Activated CD4-positive, alpha-beta T cell treated with anti-CD3 and anti-CD28 coated beads, Interleukin-2, amount 10 ng/mL, durations not matched to agents 24 days and 14 days (primary cell): ENCODE measurements at regions of chr11 and their contacts with region 1.

Region 1: GRCh38 chr11:17354601-17354991 is 3.0 kb downstream of the NCR3LG1 start:
- DNase-seq: peak; percentile 90
- H3K4me3 Mint-ChIP-seq: peak overlapping the region; percentile 93
- H3K27ac Mint-ChIP-seq: peak overlapping the region; percentile 16
- H3K4me1 Mint-ChIP-seq: peaks cover 29% of the 10 kb centered on the region
- H3K27me3 Mint-ChIP-seq: peaks cover 34% of the 10 kb centered on the region

Region 2: DNA sequence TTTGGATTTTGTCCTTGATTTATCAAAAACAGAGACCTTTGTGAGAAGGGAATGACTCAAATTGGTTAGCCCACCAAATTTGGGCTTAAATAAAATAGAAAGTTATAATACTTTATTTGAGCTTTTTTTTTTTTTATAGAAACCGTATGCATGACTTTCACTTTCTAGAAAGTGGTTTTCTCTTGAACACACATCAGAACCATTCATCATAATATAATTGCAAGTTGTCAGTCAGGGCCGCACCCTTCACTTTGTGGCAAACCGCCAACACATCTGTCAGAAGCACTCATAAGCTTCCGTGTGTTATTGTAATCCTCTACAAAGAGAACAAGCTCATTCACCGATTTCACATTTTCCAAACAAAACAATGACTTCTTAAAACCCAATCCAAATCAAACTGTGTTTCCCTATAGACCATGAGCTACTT is 1074.3 kb before region 1 on chr11:
- intact Hi-C with region 1: no loop called
- DNase-seq: peak; percentile 56
- H3K4me3 Mint-ChIP-seq: no peak overlapping the region
- H3K27ac Mint-ChIP-seq: no peak overlapping the region
- H3K4me1 Mint-ChIP-seq: no peaks in the 10 kb centered on the region
- H3K27me3 Mint-ChIP-seq: no peaks in the 10 kb centered on the region

Region 3: GRCh38 chr11:16902781-16903378 is 451.7 kb before region 1 on chr11:
- intact Hi-C with region 1: loop called (anchors 2 kb)
- DNase-seq: peak; percentile 63
- H3K4me3 Mint-ChIP-seq: peak overlapping the region; percentile 46
- H3K27ac Mint-ChIP-seq: peak overlapping the region; percentile 97
- H3K4me1 Mint-ChIP-seq: peaks cover 42% of the 10 kb centered on the region
- H3K27me3 Mint-ChIP-seq: no peaks in the 10 kb centered on the region

Region 4: DNA sequence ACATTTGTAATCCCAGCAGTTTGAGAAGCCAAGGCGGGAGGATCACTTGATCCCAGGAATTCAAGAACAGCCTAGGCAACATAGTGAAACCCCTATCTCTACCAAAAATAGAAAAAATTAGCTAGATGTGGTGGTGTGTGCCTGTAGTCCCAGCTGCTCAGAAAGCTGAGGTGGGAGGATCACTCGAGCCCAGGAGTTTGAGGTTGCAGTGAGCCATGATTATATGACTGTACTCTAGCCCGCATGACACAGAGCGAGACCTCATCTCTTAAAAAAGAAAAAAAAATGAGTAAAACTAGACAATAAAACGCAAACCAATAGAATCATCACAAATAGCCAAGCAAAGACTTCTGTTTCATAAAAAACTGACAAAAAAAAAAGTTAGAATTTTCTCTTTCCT is 56.3 kb before region 1 on chr11:
- intact Hi-C with region 1: loop called (anchors 1 kb)
- DNase-seq: peak; percentile 70
- H3K4me3 Mint-ChIP-seq: peak overlapping the region; percentile 5
- H3K27ac Mint-ChIP-seq: no peak overlapping the region
- H3K4me1 Mint-ChIP-seq: peaks cover 27% of the 10 kb centered on the region
- H3K27me3 Mint-ChIP-seq: no peaks in the 10 kb centered on the region

Region 5: DNA sequence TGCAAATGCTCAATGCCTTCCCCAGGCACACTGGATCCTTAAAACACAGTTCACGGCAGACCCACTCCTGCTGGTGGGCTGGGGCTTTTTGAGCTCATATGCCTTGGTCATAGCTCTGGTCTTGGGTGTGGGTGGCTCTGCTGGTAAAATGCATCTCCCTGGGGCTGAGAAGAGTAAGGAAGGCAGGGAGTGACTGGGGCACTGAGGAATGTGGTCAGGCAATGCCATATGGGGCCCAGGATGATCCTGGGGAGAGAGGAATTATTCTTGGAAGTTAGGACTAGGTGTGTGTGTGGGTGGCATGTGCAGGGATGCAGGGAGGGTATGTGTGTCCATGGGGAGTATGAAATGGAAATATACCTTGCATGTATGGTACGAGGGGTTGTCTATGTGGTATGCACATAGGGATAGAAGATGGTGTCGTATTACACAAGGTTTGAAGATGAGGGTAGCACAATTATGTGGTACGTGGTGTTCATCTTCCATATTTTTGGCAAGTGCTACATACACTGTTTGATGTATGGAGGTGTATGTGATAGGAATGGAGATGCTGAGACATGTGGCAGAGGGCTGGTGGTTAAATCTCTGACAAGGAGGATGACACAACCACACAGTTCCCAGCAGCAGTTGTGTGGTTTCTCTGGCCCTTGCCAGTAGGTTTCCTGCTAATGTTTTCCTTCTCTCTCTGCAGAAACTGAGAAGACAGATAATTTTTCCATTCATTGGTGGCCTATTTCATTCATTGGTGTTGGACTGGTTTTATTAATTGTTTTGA is 13.8 kb after region 1 on chr11:
- intact Hi-C with region 1: loop called (anchors 1 kb)
- DNase-seq: no peak
- H3K4me3 Mint-ChIP-seq: no peak overlapping the region
- H3K27ac Mint-ChIP-seq: peak overlapping the region; percentile 45
- H3K4me1 Mint-ChIP-seq: peaks cover 10% of the 10 kb centered on the region
- H3K27me3 Mint-ChIP-seq: peaks cover 5% of the 10 kb centered on the region

Region 6: DNA sequence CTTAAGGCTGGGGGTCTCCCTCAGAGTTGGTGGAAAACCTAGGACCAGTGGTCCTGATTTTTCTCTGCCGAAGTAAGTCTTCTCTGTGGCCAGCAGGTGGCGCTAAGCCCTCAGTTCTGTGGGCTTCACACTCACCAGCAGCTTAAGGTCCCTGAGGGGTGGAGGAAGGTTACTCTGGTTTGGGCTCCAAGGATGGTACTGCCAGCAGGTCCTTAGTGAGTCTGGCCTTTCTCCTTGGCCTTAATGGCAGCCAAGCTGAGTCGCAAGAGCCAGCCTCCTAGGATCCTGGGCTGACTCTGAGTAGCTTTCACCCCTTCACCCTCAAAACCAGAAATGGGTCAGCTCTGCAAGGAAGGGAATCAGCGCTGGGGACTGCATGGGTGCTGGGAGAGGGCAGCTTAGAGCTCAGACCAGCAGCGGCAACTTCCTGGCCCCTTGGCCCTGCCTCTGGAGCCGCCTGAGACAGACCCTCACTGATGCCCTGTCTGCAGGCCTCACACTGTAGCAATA is 29.5 kb after region 1 on chr11:
- intact Hi-C with region 1: loop called (anchors 1 kb)
- DNase-seq: peak; percentile 92
- H3K4me3 Mint-ChIP-seq: no peak overlapping the region
- H3K27ac Mint-ChIP-seq: no peak overlapping the region
- H3K4me1 Mint-ChIP-seq: peaks cover 3% of the 10 kb centered on the region
- H3K27me3 Mint-ChIP-seq: peaks cover 11% of the 10 kb centered on the region

Region 7: DNA sequence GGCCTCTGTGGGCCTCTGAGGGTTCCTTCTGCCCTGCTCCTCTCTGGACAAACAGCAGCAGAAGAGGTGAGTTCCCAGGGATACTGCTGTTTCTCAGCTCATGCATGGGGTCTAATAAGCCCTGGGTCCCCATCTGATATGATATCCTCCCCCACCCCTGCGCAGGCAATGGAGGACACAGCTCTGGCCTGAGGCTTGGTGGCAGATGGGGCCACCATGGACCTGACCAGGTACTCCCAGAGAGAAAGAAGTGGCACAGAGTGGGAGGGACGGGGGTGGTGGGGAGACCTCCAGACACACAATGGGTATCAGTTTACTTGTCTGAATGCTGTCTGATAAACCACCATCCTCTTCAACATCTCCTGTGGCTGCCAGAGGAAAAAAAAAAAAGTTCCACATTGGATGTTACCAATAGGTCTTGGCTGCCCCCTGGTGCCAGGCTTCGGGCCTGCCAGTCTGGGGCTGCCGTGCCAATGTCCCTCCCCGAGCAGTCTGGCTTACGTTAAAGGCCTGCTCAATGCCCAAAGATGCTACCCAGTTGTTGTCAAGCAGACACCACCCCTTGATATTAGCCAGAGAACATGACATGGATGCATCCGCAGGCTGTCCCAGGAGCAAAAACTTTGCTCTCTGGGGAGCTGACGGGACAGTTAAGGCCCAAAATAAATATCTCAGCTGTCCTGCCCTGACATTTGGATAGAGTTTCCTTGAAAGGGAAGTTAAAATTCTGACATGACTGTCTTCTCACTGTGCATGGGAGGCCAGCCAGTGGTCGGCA is 149.9 kb after region 1 on chr11:
- intact Hi-C with region 1: loop called (anchors 1 kb)
- DNase-seq: peak; percentile 95
- H3K4me3 Mint-ChIP-seq: no peak overlapping the region
- H3K27ac Mint-ChIP-seq: no peak overlapping the region
- H3K4me1 Mint-ChIP-seq: no peaks in the 10 kb centered on the region
- H3K27me3 Mint-ChIP-seq: peaks cover 16% of the 10 kb centered on the region

Region 8: GRCh38 chr11:18749697-18750319 is 1395.2 kb after region 1 on chr11:
- intact Hi-C with region 1: no loop called
- DNase-seq: no peak
- H3K4me3 Mint-ChIP-seq: no peak overlapping the region
- H3K27ac Mint-ChIP-seq: no peak overlapping the region
- H3K4me1 Mint-ChIP-seq: no peaks in the 10 kb centered on the region
- H3K27me3 Mint-ChIP-seq: no peaks in the 10 kb centered on the region